Panc1 (cell line): ENCODE measurements at regions of chr15 and their contacts with region 1.

Region 1: DNA sequence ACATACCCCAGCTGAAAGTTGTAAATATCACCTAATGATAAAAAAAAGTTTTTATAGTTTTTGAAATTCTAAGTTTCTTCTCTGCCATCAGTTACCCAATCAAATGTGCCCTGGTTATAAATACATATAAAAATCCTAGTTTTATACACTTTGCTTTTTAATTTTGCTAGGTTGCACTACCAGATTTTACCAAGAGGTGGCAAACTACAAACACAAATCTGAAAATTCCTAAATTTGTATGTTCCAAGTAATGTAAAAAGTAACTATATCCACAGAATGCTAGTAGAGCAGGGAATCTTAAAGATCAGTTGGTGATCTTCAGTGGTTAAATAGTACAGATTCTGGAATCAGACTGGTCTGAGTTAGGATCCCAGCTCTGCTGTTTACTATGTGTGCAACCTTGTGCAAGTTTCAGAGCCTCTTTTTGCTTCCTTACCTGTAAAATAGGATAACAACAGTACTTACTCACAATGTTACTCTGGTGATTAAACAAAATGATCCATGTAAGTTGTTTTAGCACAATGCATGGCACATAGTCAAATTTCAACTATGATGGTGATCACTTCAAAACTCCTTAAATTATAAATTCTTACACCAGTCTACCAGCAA is 11.0 kb downstream of the TRPM7 start:
- DNase-seq: no peak
- ATAC-seq: no peak
- H3K4me3 ChIP-seq: no peak overlapping the region
- H3K27ac ChIP-seq: no peak overlapping the region
- H3K4me1 ChIP-seq: no peaks in the 10 kb centered on the region
- H3K27me3 ChIP-seq: no peaks in the 10 kb centered on the region
- CTCF ChIP-seq: peak; percentile 72; the same call in 1 of the 2 replicates

Region 2: DNA sequence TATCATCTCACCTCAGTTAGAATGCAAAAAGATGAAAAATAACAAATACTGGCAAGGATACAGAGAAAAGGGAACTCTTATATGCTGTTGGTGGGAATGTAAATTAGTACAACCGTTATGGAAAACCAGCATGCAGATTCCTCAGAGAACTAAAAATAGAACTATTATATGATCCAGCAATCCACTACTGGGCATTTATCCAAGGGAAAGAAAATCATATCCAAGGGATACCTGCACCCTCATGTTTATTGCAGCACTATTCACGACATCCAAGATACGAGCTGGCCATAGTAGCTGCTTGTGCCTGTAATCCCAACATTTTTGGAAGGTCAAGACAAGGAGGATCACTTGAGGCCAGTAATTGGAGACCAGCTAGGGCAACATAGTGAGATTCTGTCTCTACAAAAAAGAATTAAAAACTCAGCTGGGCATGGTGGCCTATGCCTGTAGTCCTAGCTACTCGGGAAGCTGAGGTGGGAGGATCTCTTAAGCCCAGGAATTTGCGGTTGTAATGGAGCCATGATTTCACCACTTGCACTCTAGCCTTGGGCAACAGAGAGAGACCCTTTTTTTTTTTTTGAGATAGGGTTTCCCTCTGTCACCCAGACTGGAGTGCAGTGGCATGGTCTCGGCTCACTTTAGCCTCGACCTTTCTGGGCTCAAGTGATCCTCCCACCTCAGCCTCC is 155.8 kb before region 1 on chr15:
- CTCF ChIA-PET with region 1: no interaction called
- POLR2A ChIA-PET with region 1: interaction called, 14 read pairs
- in situ Hi-C with region 1: no loop called
- intact Hi-C with region 1: no loop called
- DNase-seq: no peak
- ATAC-seq: no peak
- H3K4me3 ChIP-seq: no peak overlapping the region
- H3K27ac ChIP-seq: no peak overlapping the region
- H3K4me1 ChIP-seq: no peaks in the 10 kb centered on the region
- H3K27me3 ChIP-seq: no peaks in the 10 kb centered on the region
- CTCF ChIP-seq: no peak

Region 3: DNA sequence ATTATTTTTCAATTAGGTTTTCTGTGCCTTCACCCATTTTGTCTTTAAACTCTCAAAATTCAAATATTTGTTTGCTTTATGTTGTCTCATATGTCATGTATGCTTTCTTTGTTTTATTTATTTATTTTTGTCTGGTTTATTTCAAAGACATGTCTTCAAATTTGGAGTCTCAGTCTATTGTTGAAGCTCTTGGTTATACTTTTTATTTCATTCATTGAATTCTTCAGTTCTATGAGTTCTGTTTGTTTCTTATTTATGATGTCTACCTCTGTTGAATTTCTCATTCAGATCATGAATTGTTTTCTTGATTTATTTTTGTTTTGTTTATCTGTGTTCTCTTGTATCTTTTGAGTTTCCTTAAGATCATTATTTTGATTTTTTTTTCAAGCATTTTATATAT is 288.4 kb after region 1 on chr15:
- CTCF ChIA-PET with region 1: no interaction called
- POLR2A ChIA-PET with region 1: interaction called, 10 read pairs
- in situ Hi-C with region 1: no loop called
- intact Hi-C with region 1: no loop called
- DNase-seq: no peak
- ATAC-seq: no peak
- H3K4me3 ChIP-seq: no peak overlapping the region
- H3K27ac ChIP-seq: no peak overlapping the region
- H3K4me1 ChIP-seq: no peaks in the 10 kb centered on the region
- H3K27me3 ChIP-seq: no peaks in the 10 kb centered on the region
- CTCF ChIP-seq: no peak